ENCODE measurements at regions of chr14 and their contacts with region 1.

Region 1: DNA sequence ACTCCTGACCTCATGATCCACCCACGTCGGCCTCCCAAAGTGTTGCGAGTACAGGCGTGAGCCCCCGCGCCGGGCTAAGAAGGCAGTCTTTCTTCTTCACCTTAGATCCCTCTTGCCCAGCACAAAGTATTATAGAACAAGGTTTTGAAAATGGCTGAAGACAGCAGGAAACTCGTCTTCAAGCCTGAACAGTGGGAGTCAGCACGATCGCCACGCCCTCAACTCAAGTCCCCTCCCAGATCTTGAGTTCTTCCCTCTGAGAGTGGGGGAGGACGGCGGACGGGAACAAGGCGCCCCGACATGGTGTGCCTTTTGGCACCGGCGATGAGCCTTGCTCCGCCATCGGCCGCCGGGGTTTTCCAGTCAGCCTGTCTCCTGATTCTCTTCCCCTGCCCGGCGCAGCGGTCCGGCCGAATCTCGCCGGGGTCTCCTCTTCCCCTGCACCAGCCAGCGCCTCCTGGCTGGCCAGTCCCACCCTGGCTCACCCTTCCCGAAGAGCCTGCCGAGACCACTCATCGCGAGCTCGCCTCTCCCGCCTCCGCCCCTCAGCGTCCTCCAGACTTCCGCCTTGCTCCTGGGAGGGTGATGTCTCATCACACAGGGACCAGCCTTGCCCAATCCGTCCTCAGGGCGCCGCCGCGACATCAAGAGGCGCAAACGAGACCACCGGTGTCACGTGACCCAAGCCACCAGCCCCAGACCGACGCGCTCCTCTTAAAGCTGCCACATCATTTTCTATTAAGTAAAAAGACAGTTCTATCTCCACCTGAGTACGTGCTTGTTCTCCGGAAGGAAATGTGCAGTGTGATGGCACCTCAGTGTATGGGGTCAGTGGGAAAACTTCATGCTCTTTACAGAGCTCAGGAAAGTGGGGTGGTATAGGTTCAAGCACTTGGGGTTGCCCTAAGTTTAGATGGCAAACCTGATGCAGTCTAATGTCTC is at the start of gene CHMP4A:
- DNase-seq: peak; percentile 85 to 98 (median 94)
- H3K4me3 ChIP-seq: peak within 1 kb of the TSS; percentile 44 to 97 (median 84)
- H3K27ac ChIP-seq: peak within 1 kb of the TSS; percentile 70 to 97 (median 90)
- H3K27me3 ChIP-seq: no peaks in the 10 kb centered on the region
- CTCF ChIP-seq: peak in 38 of 56 donors; percentile 11 to 55 (median 32)
- total RNA-seq, gene CHMP4A: 36.8 to 89.6 (median 58.1) TPM

Region 2: DNA sequence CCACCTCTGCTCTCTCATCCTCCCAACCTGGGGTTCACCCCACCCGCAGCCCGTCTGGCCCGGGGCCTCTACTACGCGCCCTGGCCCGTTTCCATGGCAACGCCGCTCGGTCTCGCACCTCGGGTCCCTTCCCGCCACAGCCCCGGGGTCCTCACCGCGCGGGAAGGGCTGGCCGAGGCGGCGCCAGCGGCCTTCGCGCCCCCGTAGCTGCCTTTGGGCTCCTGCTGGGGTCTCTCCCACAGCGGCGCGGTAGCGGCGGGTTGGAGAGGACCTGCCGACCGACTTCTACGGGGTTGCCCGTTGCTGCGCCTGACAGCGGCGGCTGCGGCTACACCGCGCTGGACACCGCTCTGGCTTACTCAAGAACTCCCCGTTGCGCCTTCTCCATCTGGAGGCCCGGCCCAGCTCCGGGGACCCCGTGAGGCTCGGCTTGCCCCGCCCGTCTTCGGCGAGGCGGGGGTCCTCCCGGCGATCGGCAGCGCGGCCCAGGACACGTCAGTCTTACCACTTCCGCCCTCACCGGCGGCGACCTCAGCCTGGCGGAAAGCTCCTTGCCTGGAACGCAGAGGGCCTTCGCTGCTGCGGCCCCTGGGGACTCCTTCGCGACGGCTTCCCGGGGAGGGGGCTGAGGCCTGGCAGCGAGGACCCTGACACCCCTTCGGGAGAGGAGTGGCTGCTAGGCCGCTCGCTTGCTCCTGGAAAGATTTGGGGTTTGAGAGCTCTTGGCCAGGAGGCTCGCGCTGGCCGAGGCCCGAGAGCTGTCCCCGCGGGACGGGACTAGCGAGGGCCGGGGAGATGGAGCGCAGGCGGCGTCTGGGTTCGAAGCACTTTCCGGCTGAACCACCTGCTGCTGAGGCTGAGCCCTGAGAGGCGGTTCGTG is 17.8 kb before region 1 on chr14 and contains the start of gene TM9SF1:
- intact Hi-C with region 1: loop called in 1 of 2 experiments (anchors 2 kb)
- DNase-seq: peak; percentile 63 to 91 (median 85)
- H3K4me3 ChIP-seq: peak within 1 kb of the TSS; percentile 69 to 99 (median 96)
- H3K27ac ChIP-seq: peak within 1 kb of the TSS; percentile 69 to 99 (median 96)
- H3K27me3 ChIP-seq: no peaks in the 10 kb centered on the region
- CTCF ChIP-seq: peak in 22 of 56 donors; percentile 6 to 43 (median 20)
- total RNA-seq, gene TM9SF1: 10.5 to 30.9 (median 22.4) TPM

Measured in dorsolateral prefrontal cortex (tissue), 120 donors.